ENCODE measurements at regions of chr19 and their contacts with region 1.

Region 1: DNA sequence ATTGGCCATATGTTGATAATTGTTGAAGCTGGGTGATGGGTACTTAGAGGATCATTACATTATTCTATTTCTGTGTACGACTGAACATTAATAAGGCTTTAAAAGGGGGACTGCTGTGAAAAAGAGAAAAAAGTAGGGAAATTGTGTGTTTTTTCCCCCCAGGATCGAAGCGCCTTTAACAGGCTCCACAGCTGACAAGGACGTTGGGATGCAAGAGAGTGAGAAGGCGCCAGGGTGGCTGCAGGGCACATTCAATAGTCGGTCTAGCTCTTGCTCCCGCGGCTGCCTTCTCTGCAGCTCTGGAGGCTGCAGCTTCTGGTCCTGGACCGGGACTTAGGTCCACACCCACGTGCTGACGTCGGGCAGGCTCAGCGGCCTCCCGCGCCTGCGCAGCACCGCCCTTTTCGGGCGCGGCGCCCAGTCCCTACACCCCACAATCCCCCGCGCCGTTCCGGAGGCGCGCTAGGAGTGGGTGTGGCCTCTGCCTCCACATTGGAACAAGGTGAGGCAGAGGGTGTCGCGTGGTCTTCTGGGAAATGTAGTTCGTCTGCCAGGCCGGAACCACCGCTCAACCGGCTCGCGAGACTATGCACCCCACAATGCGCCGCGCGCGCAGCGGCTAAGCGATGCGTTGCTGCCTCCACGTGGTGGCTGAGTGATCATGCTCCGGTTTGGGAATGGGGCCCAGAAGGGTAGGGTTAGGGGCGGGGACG is 4.9 kb upstream of the LRFN3 start:
- DNase-seq: peak; percentile 96 to 100 (median 100)
- ATAC-seq: peak; percentile 98
- H3K4me3 ChIP-seq: peak overlapping the region; percentile 59
- H3K4me3 Mint-ChIP-seq: peak overlapping the region; percentile 61 to 94 (median 83)
- H3K27ac ChIP-seq: peak overlapping the region; percentile 73
- H3K27ac Mint-ChIP-seq: peak overlapping the region; percentile 51 to 98 (median 90)
- H3K4me1 ChIP-seq: peaks cover 32 to 44% of the 10 kb centered on the region in 2 donors
- H3K4me1 Mint-ChIP-seq: peaks cover 33 to 63% (median 49%) of the 10 kb centered on the region in 7 donors
- H3K27me3 ChIP-seq: no peaks in the 10 kb centered on the region
- H3K27me3 Mint-ChIP-seq: no peaks in the 10 kb centered on the region

Region 2: GRCh38 chr19:35648017-35648961 is 283.0 kb before region 1 on chr19 and contains the start of gene COX6B1:
- CTCF ChIA-PET with region 1: no interaction called
- POLR2A ChIA-PET with region 1: interaction called, 3 read pairs
- intact Hi-C with region 1: loop called in 1 of 2 experiments (anchors 1 kb)
- DNase-seq: peak; percentile 63 to 95 (median 91)
- ATAC-seq: peak; percentile 80
- H3K4me3 ChIP-seq: peak within 1 kb of the TSS; percentile 95
- H3K4me3 Mint-ChIP-seq: peak within 1 kb of the TSS; percentile 88 to 99 (median 97)
- H3K27ac ChIP-seq: peak within 1 kb of the TSS; percentile 89
- H3K27ac Mint-ChIP-seq: peak within 1 kb of the TSS; percentile 89 to 98 (median 95)
- H3K4me1 ChIP-seq: peaks cover 7 to 25% of the 10 kb centered on the region in 2 donors
- H3K4me1 Mint-ChIP-seq: peaks cover 17 to 67% (median 42%) of the 10 kb centered on the region in 7 donors
- H3K27me3 ChIP-seq: no peaks in the 10 kb centered on the region
- H3K27me3 Mint-ChIP-seq: no peaks in the 10 kb centered on the region
- total RNA-seq, gene COX6B1: 172 to 464 (median 232) TPM

Region 3: GRCh38 chr19:35740423-35741202 is 190.7 kb before region 1 on chr19:
- CTCF ChIA-PET with region 1: no interaction called
- POLR2A ChIA-PET with region 1: interaction called, 4 read pairs
- intact Hi-C with region 1: loop called (anchors 1 kb)
- DNase-seq: peak; percentile 81 to 95 (median 92)
- ATAC-seq: peak; percentile 78
- H3K4me3 ChIP-seq: peak overlapping the region; percentile 89
- H3K4me3 Mint-ChIP-seq: peak overlapping the region; percentile 87 to 100 (median 92)
- H3K27ac ChIP-seq: peak overlapping the region; percentile 91
- H3K27ac Mint-ChIP-seq: peak overlapping the region; percentile 85 to 99 (median 96)
- H3K4me1 ChIP-seq: peaks cover 27% of the 10 kb centered on the region in 2 donors
- H3K4me1 Mint-ChIP-seq: peaks cover 25 to 67% (median 48%) of the 10 kb centered on the region in 7 donors
- H3K27me3 ChIP-seq: no peaks in the 10 kb centered on the region
- H3K27me3 Mint-ChIP-seq: peaks cover 0 to 2% (median 0%) of the 10 kb centered on the region in 5 donors

Region 4: GRCh38 chr19:35775298-35776110 is 155.8 kb before region 1 on chr19 and contains the start of gene ARHGAP33:
- CTCF ChIA-PET with region 1: interaction called, 4 read pairs
- POLR2A ChIA-PET with region 1: no interaction called
- intact Hi-C with region 1: loop called (anchors 1 kb)
- DNase-seq: peak; percentile 96 to 99 (median 98)
- ATAC-seq: peak; percentile 100
- H3K4me3 ChIP-seq: peak within 1 kb of the TSS; percentile 56
- H3K4me3 Mint-ChIP-seq: peak within 1 kb of the TSS; percentile 77 to 94 (median 86)
- H3K27ac ChIP-seq: peak within 1 kb of the TSS; percentile 61
- H3K27ac Mint-ChIP-seq: peak within 1 kb of the TSS in 7 of 9 donors; percentile 12 to 88 (median 84)
- H3K4me1 ChIP-seq: peaks cover 0 to 6% of the 10 kb centered on the region in 2 donors
- H3K4me1 Mint-ChIP-seq: peaks cover 11 to 28% (median 18%) of the 10 kb centered on the region in 7 donors
- H3K27me3 ChIP-seq: no peaks in the 10 kb centered on the region
- H3K27me3 Mint-ChIP-seq: no peaks in the 10 kb centered on the region
- total RNA-seq, gene ARHGAP33: 15.3 to 55.5 (median 23.4) TPM

Region 5: GRCh38 chr19:35899547-35900214 is 31.6 kb before region 1 on chr19:
- CTCF ChIA-PET with region 1: interaction called, 9 read pairs
- POLR2A ChIA-PET with region 1: interaction called, 44 read pairs
- intact Hi-C with region 1: loop called (anchors 1 kb)
- DNase-seq: peak; percentile 74 to 94 (median 87)
- ATAC-seq: peak; percentile 74
- H3K4me3 ChIP-seq: peak overlapping the region; percentile 94
- H3K4me3 Mint-ChIP-seq: peak overlapping the region; percentile 83 to 100 (median 95)
- H3K27ac ChIP-seq: peak overlapping the region; percentile 100
- H3K27ac Mint-ChIP-seq: peak overlapping the region; percentile 92 to 97 (median 96)
- H3K4me1 ChIP-seq: peaks cover 35 to 43% of the 10 kb centered on the region in 2 donors
- H3K4me1 Mint-ChIP-seq: peaks cover 34 to 65% (median 46%) of the 10 kb centered on the region in 7 donors
- H3K27me3 ChIP-seq: no peaks in the 10 kb centered on the region
- H3K27me3 Mint-ChIP-seq: no peaks in the 10 kb centered on the region

Region 6: GRCh38 chr19:36014029-36014924 is 83.0 kb after region 1 on chr19 and contains the start of gene ALKBH6:
- CTCF ChIA-PET with region 1: no interaction called
- POLR2A ChIA-PET with region 1: no interaction called
- intact Hi-C with region 1: loop called in 1 of 2 experiments (anchors 1 kb)
- DNase-seq: peak; percentile 94 to 98 (median 97)
- ATAC-seq: peak; percentile 100
- H3K4me3 ChIP-seq: peak within 1 kb of the TSS; percentile 93
- H3K4me3 Mint-ChIP-seq: peak within 1 kb of the TSS; percentile 92 to 99 (median 95)
- H3K27ac ChIP-seq: peak within 1 kb of the TSS; percentile 86
- H3K27ac Mint-ChIP-seq: peak within 1 kb of the TSS; percentile 88 to 99 (median 94)
- H3K4me1 ChIP-seq: peaks cover 12 to 18% of the 10 kb centered on the region in 2 donors
- H3K4me1 Mint-ChIP-seq: peaks cover 36 to 53% (median 46%) of the 10 kb centered on the region in 7 donors
- H3K27me3 ChIP-seq: no peaks in the 10 kb centered on the region
- H3K27me3 Mint-ChIP-seq: no peaks in the 10 kb centered on the region
- total RNA-seq, gene ALKBH6: 32.6 to 60.6 (median 49.3) TPM

Region 7: GRCh38 chr19:36331353-36332228 is 400.3 kb after region 1 on chr19:
- CTCF ChIA-PET with region 1: no interaction called
- POLR2A ChIA-PET with region 1: no interaction called
- intact Hi-C with region 1: no loop called
- DNase-seq: peak; percentile 6 to 74 (median 36)
- ATAC-seq: peak; percentile 97
- H3K4me3 ChIP-seq: peak overlapping the region; percentile 54
- H3K4me3 Mint-ChIP-seq: peak overlapping the region; percentile 5 to 82 (median 66)
- H3K27ac ChIP-seq: no peak overlapping the region
- H3K27ac Mint-ChIP-seq: peak overlapping the region in 1 of 9 donors; percentile 41
- H3K4me1 ChIP-seq: no peaks in the 10 kb centered on the region
- H3K4me1 Mint-ChIP-seq: peaks cover 0 to 13% (median 7%) of the 10 kb centered on the region in 7 donors
- H3K27me3 ChIP-seq: no peaks in the 10 kb centered on the region
- H3K27me3 Mint-ChIP-seq: no peaks in the 10 kb centered on the region

Measured in naive thymus-derived CD4-positive, alpha-beta T cell (primary cell).